Mammary epithelial cell (primary cell): ENCODE measurements at regions of chr6 and their contacts with region 1.

Region 1: DNA sequence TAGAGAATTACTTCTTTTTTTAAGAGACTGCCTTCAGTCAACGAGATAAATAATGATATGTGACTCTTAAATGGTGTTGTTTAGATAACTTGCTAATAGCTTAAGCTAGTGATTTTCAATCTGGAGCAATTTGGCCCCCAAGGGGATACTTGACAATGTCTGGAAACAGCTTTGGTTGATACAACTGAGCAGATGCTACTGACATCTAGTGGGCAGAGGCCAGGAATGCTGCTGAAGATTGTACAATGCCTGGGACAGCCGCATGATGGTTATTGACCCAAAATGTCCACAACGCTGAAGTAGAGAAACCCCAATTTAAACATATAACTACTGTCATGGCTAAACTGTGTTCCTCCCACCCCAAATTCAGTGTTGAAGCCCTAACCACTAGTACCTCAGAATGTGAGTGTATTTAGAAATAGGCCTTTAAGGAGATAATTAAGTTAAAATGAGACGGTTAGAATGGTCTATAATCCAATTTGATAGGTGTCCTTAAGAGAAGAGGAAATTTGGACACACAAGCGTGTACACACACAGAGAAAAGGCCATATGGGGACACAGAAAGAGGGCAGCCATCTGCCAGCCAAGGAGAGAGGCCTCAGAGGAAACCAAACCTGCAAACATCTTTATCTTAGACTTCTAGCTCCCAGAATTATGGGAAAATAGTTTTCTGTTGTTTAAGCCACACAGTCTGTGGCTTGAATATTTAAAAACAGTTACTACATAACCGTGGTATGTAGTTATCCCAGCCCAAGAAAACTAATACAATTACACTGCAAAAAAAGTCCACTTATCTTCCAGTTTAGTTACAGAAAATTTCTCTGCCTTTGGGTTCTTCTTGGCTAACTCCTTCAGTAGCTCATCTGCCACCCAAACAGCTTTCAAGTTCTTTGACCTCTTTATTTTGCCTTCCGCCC is 22.2 kb downstream of the RWDD2A start:
- DNase-seq: peak; percentile 51
- H3K4me3 ChIP-seq: no peak overlapping the region
- H3K27ac ChIP-seq: no peak overlapping the region
- H3K4me1 ChIP-seq: no peaks in the 10 kb centered on the region
- H3K27me3 ChIP-seq: no peaks in the 10 kb centered on the region
- CTCF ChIP-seq: peak; percentile 80 to 91

Region 2: GRCh38 chr6:82247634-82248232 is 967.7 kb before region 1 on chr6 and contains the start of gene IBTK:
- CTCF ChIA-PET with region 1: no interaction called
- dilution Hi-C with region 1: no loop called
- in situ Hi-C with region 1: no loop called
- intact Hi-C with region 1: loop called (anchors 10 kb)
- DNase-seq: peak; percentile 88
- H3K4me3 ChIP-seq: peak within 1 kb of the TSS; percentile 69 to 89 (median 87)
- H3K27ac ChIP-seq: peak within 1 kb of the TSS; percentile 86
- H3K4me1 ChIP-seq: peaks cover 18% of the 10 kb centered on the region
- H3K27me3 ChIP-seq: no peaks in the 10 kb centered on the region
- CTCF ChIP-seq: no peak
- total RNA-seq, gene IBTK: 39.1 to 49.2 TPM

Region 3: GRCh38 chr6:83183082-83183828 is 32.1 kb before region 1 on chr6:
- CTCF ChIA-PET with region 1: no interaction called
- dilution Hi-C with region 1: no loop called
- in situ Hi-C with region 1: no loop called
- intact Hi-C with region 1: loop called (anchors 2 kb)
- DNase-seq: peak; percentile 98
- H3K4me3 ChIP-seq: no peak overlapping the region
- H3K27ac ChIP-seq: peak overlapping the region; percentile 63
- H3K4me1 ChIP-seq: peaks cover 26% of the 10 kb centered on the region
- H3K27me3 ChIP-seq: no peaks in the 10 kb centered on the region
- CTCF ChIP-seq: no peak